Prostate gland (tissue), 2 donors: ENCODE measurements at regions of chr5 and their contacts with region 1.

Region 1: DNA sequence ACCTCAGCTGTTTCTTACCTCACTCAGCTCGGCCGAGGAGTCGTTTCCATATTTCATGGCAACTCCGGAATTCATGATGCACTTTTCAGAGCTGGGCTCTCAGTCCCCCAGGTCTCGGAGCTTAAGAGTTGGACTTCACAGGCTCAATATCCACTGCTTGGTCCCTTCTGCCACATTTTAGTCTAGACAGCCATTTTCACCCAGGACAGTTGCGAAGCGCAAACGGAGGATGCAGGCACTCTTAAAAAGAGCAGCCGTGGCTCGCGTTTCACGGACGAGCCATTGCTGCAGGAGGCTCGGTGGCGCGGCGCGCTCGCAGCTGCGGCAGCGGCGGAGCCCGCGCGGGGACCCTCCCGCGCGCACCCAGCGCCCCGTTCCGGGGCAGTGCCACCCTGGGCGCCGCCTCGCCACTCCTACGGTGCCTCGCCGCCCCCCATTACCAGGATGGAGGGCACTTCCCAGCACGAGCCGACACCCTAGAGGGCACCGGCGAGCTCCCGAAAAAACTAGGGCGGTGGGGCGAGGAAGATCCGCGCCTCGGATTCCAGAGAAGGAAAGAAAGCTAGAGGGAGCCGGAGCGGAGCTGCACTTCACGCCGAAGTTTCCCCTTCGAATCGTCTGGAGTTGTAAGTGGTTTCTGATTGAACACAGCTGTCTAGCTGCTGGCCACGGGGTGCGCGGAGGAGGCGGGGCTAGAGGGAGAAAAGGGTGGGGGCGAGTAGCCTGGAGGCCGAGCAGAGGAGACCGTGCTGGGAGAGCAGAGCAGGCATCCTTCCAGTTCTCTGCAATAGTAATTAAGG is 140.3 kb downstream of the TSSK1B start:
- DNase-seq: peak; percentile 86
- H3K4me3 ChIP-seq: peak overlapping the region; percentile 64 to 69
- H3K27ac ChIP-seq: peak overlapping the region; percentile 83 to 84
- H3K4me1 ChIP-seq: no peaks in the 10 kb centered on the region
- H3K27me3 ChIP-seq: no peaks in the 10 kb centered on the region
- CTCF ChIP-seq: peak; percentile 8 to 30 (median 15)
- POLR2A ChIP-seq: peak; percentile 89

Region 2: DNA sequence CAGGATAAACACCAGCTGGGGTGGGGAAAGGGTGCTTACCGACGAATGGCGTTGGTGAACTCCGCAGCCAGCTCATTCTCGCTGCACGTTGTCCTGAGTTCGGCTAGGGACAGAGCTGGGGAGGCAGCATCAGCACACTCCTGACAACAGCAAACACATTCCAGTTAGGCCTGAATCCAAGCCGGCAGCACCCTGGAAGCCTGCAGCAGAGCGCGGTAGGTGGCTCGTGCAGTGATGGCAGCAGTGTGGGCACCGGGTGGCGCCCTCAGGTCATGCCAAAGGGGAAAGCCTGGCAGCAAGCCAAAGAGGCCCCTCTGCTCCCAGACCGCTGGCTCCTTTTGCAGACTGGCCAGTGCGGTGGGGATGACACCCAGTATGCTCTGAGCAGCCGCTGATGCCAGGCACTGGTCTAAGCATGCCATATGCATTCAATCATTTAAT is 251.0 kb before region 1 on chr5:
- intact Hi-C with region 1: loop called (anchors 10 kb)
- DNase-seq: no peak
- H3K4me3 ChIP-seq: no peak overlapping the region
- H3K27ac ChIP-seq: peak overlapping the region; percentile 12 to 25
- H3K4me1 ChIP-seq: no peaks in the 10 kb centered on the region
- H3K27me3 ChIP-seq: no peaks in the 10 kb centered on the region
- CTCF ChIP-seq: peak in 2 of 4 experiments; percentile 24 to 30
- POLR2A ChIP-seq: no peak

Region 3: GRCh38 chr5:113172231-113172826 is 122.2 kb before region 1 on chr5:
- intact Hi-C with region 1: loop called (anchors 5 kb)
- DNase-seq: no peak
- H3K4me3 ChIP-seq: no peak overlapping the region
- H3K27ac ChIP-seq: no peak overlapping the region
- H3K4me1 ChIP-seq: no peaks in the 10 kb centered on the region
- H3K27me3 ChIP-seq: no peaks in the 10 kb centered on the region
- CTCF ChIP-seq: no peak
- POLR2A ChIP-seq: no peak

Region 4: DNA sequence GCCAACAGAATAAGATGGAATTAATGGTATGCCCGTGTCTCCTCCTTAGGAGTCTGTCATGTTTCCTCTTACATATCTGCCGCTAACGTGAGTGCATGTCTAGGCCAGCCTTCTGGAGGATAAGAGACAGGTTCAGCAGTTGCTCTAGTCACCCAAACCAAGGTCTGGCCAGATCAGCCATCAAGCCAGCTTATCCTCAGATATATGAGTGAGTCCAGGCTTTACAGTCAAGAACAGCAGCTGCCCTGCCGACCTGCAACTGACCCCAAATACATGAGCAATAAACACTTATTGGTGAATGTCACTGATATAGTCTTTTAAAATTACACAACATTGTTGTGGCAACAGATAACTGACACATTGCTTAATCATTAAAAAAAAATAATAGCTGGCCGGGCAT is 16.8 kb after region 1 on chr5:
- intact Hi-C with region 1: no loop called
- DNase-seq: no peak
- H3K4me3 ChIP-seq: no peak overlapping the region
- H3K27ac ChIP-seq: no peak overlapping the region
- H3K4me1 ChIP-seq: no peaks in the 10 kb centered on the region
- H3K27me3 ChIP-seq: no peaks in the 10 kb centered on the region
- CTCF ChIP-seq: no peak
- POLR2A ChIP-seq: no peak

Region 5: DNA sequence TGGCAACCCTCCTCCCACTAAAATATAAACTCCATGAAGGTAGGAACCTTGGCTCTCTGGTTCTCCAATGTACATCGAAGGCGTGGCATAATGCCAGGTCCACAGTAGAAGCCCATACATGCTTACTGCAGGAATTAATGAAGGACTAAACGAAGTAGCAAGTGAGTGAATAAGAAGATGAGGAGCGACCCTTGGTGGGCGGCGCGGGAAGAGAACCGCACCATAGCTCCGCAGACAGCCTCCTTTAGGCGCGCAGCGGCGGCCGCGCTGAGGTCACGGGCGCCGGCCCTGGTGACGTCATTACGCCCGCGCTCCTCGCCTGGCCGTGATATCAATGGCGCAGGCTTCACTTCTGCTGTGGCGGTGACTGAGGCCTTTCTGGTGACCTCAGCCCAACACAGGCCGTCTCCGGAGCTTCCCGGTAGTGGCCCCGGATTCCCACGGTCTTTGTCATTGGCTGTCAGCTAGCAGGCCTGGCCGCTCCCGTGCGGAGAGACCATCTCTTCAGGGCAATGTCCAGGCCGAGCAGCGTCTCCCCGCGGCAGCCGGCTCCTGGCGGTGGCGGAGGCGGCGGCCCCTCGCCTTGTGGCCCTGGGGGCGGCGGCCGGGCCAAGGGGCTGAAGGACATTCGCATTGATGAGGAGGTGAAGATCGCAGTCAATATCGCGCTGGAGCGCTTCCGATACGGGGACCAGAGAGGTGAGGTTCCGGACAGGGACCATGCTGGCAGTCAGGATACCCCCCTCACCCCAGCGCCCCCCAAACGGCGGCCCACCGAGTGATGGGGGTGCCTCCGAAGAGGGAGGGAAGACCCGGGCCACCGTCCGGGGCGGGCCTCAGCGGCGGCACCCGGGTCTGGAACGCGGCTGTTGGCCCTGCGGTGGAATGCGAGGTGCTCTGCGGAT is 219.1 kb after region 1 on chr5 and contains the start of gene YTHDC2:
- intact Hi-C with region 1: no loop called
- DNase-seq: peak; percentile 65
- H3K4me3 ChIP-seq: peak within 1 kb of the TSS; percentile 60 to 68
- H3K27ac ChIP-seq: peak within 1 kb of the TSS; percentile 80 to 90
- H3K4me1 ChIP-seq: no peaks in the 10 kb centered on the region
- H3K27me3 ChIP-seq: no peaks in the 10 kb centered on the region
- CTCF ChIP-seq: peak in 3 of 4 experiments; percentile 8 to 42 (median 21)
- POLR2A ChIP-seq: peak; percentile 65
- total RNA-seq, gene YTHDC2: 17.7 to 32.0 TPM